WTC11 (cell line): ENCODE measurements at regions of chr22 and their contacts with region 1.

Region 1: GRCh38 chr22:41746567-41747400 is 47.5 kb downstream of the MEI1 start:
- DNase-seq: peak; percentile 78
- ATAC-seq: peak; percentile 99
- H3K4me3 Mint-ChIP-seq: no peak overlapping the region
- H3K27ac Mint-ChIP-seq: no peak overlapping the region
- H3K4me1 Mint-ChIP-seq: no peaks in the 10 kb centered on the region
- H3K27me3 Mint-ChIP-seq: peaks cover 4% of the 10 kb centered on the region
- CTCF ChIP-seq: peak; percentile 50

Region 2: DNA sequence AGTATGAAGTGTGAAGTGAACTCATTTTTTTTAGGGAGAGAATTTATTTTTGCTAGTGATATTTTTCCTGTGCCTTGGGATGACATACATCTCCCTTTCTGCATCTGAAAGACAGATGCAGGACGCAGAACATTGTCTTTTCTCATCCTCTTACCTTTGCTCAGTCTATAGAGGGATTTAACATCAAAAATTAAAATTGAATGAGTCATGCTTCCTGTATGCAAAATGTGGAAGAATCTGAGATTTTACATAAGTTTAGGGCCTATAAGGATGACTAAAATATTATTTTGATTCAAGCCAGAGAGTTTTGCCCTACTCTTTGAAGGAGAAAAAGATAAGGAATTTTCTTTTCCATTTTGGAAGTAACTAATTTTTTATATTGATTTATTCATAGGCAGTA is 98.4 kb before region 1 on chr22:
- CTCF ChIA-PET with region 1: no interaction called
- POLR2A ChIA-PET with region 1: no interaction called
- DNase-seq: no peak
- ATAC-seq: no peak
- H3K4me3 Mint-ChIP-seq: no peak overlapping the region
- H3K27ac Mint-ChIP-seq: no peak overlapping the region
- H3K4me1 Mint-ChIP-seq: no peaks in the 10 kb centered on the region
- H3K27me3 Mint-ChIP-seq: no peaks in the 10 kb centered on the region
- CTCF ChIP-seq: no peak

Region 3: GRCh38 chr22:41681616-41682015 is 65.2 kb before region 1 on chr22:
- CTCF ChIA-PET with region 1: no interaction called
- POLR2A ChIA-PET with region 1: no interaction called
- DNase-seq: no peak
- ATAC-seq: no peak
- H3K4me3 Mint-ChIP-seq: peak overlapping the region; percentile 98
- H3K27ac Mint-ChIP-seq: no peak overlapping the region
- H3K4me1 Mint-ChIP-seq: no peaks in the 10 kb centered on the region; the same call in 1 of the 2 replicates
- H3K27me3 Mint-ChIP-seq: no peaks in the 10 kb centered on the region
- CTCF ChIP-seq: no peak

Region 4: DNA sequence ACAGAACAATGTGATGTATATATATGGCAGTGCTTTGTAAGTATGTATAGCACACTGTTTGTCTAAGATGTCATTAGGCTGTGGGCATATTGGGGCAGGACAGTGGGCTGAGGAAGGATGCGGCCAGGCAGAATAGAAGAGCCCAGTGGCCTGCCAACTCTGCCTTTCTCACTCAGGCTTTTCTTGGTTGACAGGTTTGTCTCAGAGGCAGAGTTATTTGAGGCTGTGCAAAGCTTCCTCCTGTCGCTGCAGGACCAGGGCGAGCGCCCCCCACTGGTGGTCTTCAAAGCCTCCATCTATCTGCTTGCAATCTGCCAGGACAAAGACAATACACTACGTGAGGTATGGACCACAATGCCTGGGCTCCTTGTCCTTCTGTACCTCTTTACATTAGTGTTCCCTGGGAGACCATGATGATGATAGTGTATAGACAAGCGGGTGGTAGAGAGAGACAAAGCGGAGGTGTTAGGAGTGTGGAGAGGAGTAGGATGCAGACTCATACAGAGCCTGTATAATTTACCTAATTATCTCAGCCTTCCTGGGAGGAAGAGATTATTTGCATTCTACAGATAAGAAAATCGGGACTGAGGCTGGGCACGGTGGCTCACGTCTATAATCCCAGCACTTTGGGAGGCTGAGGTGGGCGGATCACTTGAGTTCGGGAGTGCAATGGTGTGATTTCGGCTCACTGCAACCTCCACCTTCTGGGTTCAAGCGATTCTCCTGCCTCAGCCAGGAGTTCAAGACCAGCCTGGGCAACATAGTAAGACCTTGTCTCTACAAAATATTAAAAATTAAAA is 16.4 kb after region 1 on chr22:
- CTCF ChIA-PET with region 1: interaction called, 50 read pairs
- POLR2A ChIA-PET with region 1: no interaction called
- DNase-seq: peak; percentile 91
- ATAC-seq: peak; percentile 98
- H3K4me3 Mint-ChIP-seq: no peak overlapping the region
- H3K27ac Mint-ChIP-seq: no peak overlapping the region
- H3K4me1 Mint-ChIP-seq: no peaks in the 10 kb centered on the region
- H3K27me3 Mint-ChIP-seq: no peaks in the 10 kb centered on the region; the same call in none of the 2 replicates
- CTCF ChIP-seq: peak; percentile 69

Region 5: GRCh38 chr22:41780746-41781505 is 34.1 kb after region 1 on chr22:
- CTCF ChIA-PET with region 1: interaction called, 20 read pairs
- POLR2A ChIA-PET with region 1: no interaction called
- DNase-seq: no peak
- ATAC-seq: peak; percentile 41
- H3K4me3 Mint-ChIP-seq: no peak overlapping the region
- H3K27ac Mint-ChIP-seq: no peak overlapping the region
- H3K4me1 Mint-ChIP-seq: peaks cover 8% of the 10 kb centered on the region
- H3K27me3 Mint-ChIP-seq: peaks cover 7% of the 10 kb centered on the region; the same call in 1 of the 2 replicates
- CTCF ChIP-seq: no peak

Region 6: GRCh38 chr22:41822317-41823060 is 75.7 kb after region 1 on chr22:
- CTCF ChIA-PET with region 1: interaction called, 13 read pairs
- POLR2A ChIA-PET with region 1: no interaction called
- DNase-seq: no peak
- ATAC-seq: peak; percentile 54
- H3K4me3 Mint-ChIP-seq: no peak overlapping the region
- H3K27ac Mint-ChIP-seq: peak overlapping the region; percentile 32; the same call in 1 of the 2 replicates
- H3K4me1 Mint-ChIP-seq: peaks cover 35% of the 10 kb centered on the region
- H3K27me3 Mint-ChIP-seq: no peaks in the 10 kb centered on the region; the same call in 1 of the 2 replicates
- CTCF ChIP-seq: no peak

Region 7: GRCh38 chr22:41910050-41911000 is 163.5 kb after region 1 on chr22:
- CTCF ChIA-PET with region 1: interaction called, 11 read pairs
- POLR2A ChIA-PET with region 1: no interaction called
- DNase-seq: peak; percentile 69
- ATAC-seq: peak; percentile 27
- H3K4me3 Mint-ChIP-seq: no peak overlapping the region
- H3K27ac Mint-ChIP-seq: no peak overlapping the region
- H3K4me1 Mint-ChIP-seq: peaks cover 17% of the 10 kb centered on the region
- H3K27me3 Mint-ChIP-seq: peaks cover 57% of the 10 kb centered on the region
- CTCF ChIP-seq: no peak